Activated T-helper 1 cell treated with anti-CD3 and anti-CD28 coated beads, Interleukin-12 subunit alpha, Interleukin-12 subunit beta, Interleukin-2, Interleukin-4 antibody, amounts not matched to agents 30 ng/mL and 10 ng/mL and 1 ng/mL, durations not matched to agents 14 hours and 24 hours and 36 hours (primary cell): ENCODE measurements at regions of chr5 and their contacts with region 1.

Region 1: GRCh38 chr5:139560752-139561654 is at the start of gene UBE2D2:
- DNase-seq: peak; percentile 97
- H3K4me3 Mint-ChIP-seq: peak within 1 kb of the TSS; percentile 98
- H3K27ac Mint-ChIP-seq: peak within 1 kb of the TSS; percentile 95
- H3K4me1 Mint-ChIP-seq: peaks cover 27% of the 10 kb centered on the region
- H3K27me3 Mint-ChIP-seq: no peaks in the 10 kb centered on the region
- total RNA-seq, gene UBE2D2: 251 and 265 TPM in 2 replicates

Region 2: GRCh38 chr5:139197710-139198669 is 363.0 kb before region 1 on chr5 and contains the start of gene SIL1:
- intact Hi-C with region 1: loop called (anchors 5 kb)
- DNase-seq: peak; percentile 94
- H3K4me3 Mint-ChIP-seq: peak within 1 kb of the TSS; percentile 90
- H3K27ac Mint-ChIP-seq: peak within 1 kb of the TSS; percentile 89
- H3K4me1 Mint-ChIP-seq: peaks cover 32% of the 10 kb centered on the region
- H3K27me3 Mint-ChIP-seq: no peaks in the 10 kb centered on the region
- total RNA-seq, gene SIL1: 28.6 and 41.1 TPM in 2 replicates

Region 3: GRCh38 chr5:139403787-139404483 is 157.1 kb before region 1 on chr5 and contains the start of gene SPATA24:
- intact Hi-C with region 1: loop called (anchors 1 kb)
- DNase-seq: peak; percentile 98
- H3K4me3 Mint-ChIP-seq: peak within 1 kb of the TSS; percentile 91
- H3K27ac Mint-ChIP-seq: peak within 1 kb of the TSS; percentile 100
- H3K4me1 Mint-ChIP-seq: peaks cover 47% of the 10 kb centered on the region
- H3K27me3 Mint-ChIP-seq: no peaks in the 10 kb centered on the region
- total RNA-seq, gene SPATA24: 4.1 and 5.3 TPM in 2 replicates

Region 4: GRCh38 chr5:139446956-139447779 is 113.8 kb before region 1 on chr5:
- intact Hi-C with region 1: loop called (anchors 1 kb)
- DNase-seq: no peak
- H3K4me3 Mint-ChIP-seq: peak overlapping the region; percentile 46
- H3K27ac Mint-ChIP-seq: peak overlapping the region; percentile 98
- H3K4me1 Mint-ChIP-seq: peaks cover 64% of the 10 kb centered on the region
- H3K27me3 Mint-ChIP-seq: no peaks in the 10 kb centered on the region

Region 5: GRCh38 chr5:139597134-139597533 is 36.1 kb after region 1 on chr5:
- intact Hi-C with region 1: loop called (anchors 5 kb)
- DNase-seq: no peak
- H3K4me3 Mint-ChIP-seq: no peak overlapping the region
- H3K27ac Mint-ChIP-seq: peak overlapping the region; percentile 62
- H3K4me1 Mint-ChIP-seq: peaks cover 28% of the 10 kb centered on the region
- H3K27me3 Mint-ChIP-seq: no peaks in the 10 kb centered on the region